CD4-positive, alpha-beta T cell (primary cell): ENCODE measurements at regions of chr13 and their contacts with region 1.

Region 1: GRCh38 chr13:30465585-30466357 is at the start of gene HMGB1:
- DNase-seq: peak; percentile 92 to 98 (median 94)
- ATAC-seq: peak; percentile 86
- H3K4me3 ChIP-seq: peak within 1 kb of the TSS; percentile 69
- H3K4me3 Mint-ChIP-seq: peak within 1 kb of the TSS; percentile 95
- H3K27ac ChIP-seq: peak within 1 kb of the TSS in 1 of 2 donors; percentile 96
- H3K27ac Mint-ChIP-seq: peak within 1 kb of the TSS; percentile 98
- H3K4me1 ChIP-seq: peaks cover 11% of the 10 kb centered on the region
- H3K4me1 Mint-ChIP-seq: peaks cover 37% of the 10 kb centered on the region
- H3K27me3 ChIP-seq: no peaks in the 10 kb centered on the region
- H3K27me3 Mint-ChIP-seq: peaks cover 6% of the 10 kb centered on the region
- CTCF ChIP-seq: no peak
- total RNA-seq, gene HMGB1: 448 to 465 TPM

Region 2: GRCh38 chr13:29595380-29596063 is 870.2 kb before region 1 on chr13 and contains the start of gene SLC7A1:
- CTCF ChIA-PET with region 1: no interaction called
- POLR2A ChIA-PET with region 1: interaction called, 5 read pairs
- intact Hi-C with region 1: loop called in 1 of 2 experiments (anchors 10 kb)
- DNase-seq: peak; percentile 54 to 95 (median 74)
- ATAC-seq: peak; percentile 90
- H3K4me3 ChIP-seq: peak within 1 kb of the TSS; percentile 65
- H3K4me3 Mint-ChIP-seq: peak within 1 kb of the TSS; percentile 97
- H3K27ac ChIP-seq: peak within 1 kb of the TSS; percentile 31 to 52
- H3K27ac Mint-ChIP-seq: peak within 1 kb of the TSS; percentile 93
- H3K4me1 ChIP-seq: peaks cover 23% of the 10 kb centered on the region
- H3K4me1 Mint-ChIP-seq: peaks cover 45% of the 10 kb centered on the region
- H3K27me3 ChIP-seq: no peaks in the 10 kb centered on the region
- H3K27me3 Mint-ChIP-seq: no peaks in the 10 kb centered on the region
- CTCF ChIP-seq: no peak
- total RNA-seq, gene SLC7A1: 11.3 to 12.3 TPM

Region 3: DNA sequence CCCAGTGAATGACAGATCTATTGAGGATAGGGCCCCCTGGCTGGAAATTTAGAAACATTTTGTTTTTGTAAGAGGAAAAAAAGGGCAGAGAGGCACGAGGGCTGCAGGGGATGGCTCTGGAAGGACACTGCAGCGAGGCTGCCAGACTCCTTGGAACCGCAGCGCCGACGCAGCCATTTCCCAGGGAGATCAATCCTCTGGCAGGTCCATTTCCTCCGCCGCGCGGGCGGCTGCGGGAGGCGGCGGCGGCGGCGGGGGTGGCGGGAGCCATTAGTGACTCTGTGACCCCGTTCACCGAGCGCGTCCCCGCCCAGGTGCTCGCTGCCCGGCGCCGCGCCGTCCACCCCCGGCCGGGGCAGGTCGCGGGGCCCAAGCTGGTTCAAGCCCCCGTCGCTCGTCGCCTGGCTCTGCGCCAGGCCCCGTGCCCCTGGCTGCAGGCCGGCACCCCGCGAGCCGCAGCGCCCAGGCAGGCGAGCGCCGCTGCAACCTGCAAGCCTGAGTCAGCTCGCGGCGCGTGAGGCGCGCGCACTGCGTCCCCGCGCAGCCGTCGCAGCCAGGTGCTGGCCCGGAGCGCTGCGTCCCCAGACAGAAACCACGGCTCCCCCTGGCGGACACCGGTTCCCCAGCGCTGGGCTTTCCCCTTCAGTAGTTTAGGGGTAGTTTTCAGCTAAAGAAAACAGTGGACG is 351.1 kb before region 1 on chr13:
- CTCF ChIA-PET with region 1: interaction called, 7 read pairs
- POLR2A ChIA-PET with region 1: interaction called, 7 read pairs
- intact Hi-C with region 1: loop called in 1 of 2 experiments (anchors 5 kb)
- DNase-seq: peak; percentile 85 to 97 (median 95)
- ATAC-seq: peak; percentile 88
- H3K4me3 ChIP-seq: peak overlapping the region; percentile 53
- H3K4me3 Mint-ChIP-seq: peak overlapping the region; percentile 91
- H3K27ac ChIP-seq: no peak overlapping the region
- H3K27ac Mint-ChIP-seq: peak overlapping the region; percentile 78
- H3K4me1 ChIP-seq: peaks cover 29% of the 10 kb centered on the region
- H3K4me1 Mint-ChIP-seq: peaks cover 44% of the 10 kb centered on the region
- H3K27me3 ChIP-seq: no peaks in the 10 kb centered on the region
- H3K27me3 Mint-ChIP-seq: no peaks in the 10 kb centered on the region
- CTCF ChIP-seq: peak; percentile 86

Region 4: GRCh38 chr13:30306762-30307193 is 159.0 kb before region 1 on chr13:
- CTCF ChIA-PET with region 1: interaction called, 3 read pairs
- POLR2A ChIA-PET with region 1: interaction called, 6 read pairs
- intact Hi-C with region 1: loop called in 1 of 2 experiments (anchors 5 kb)
- DNase-seq: peak; percentile 81 to 94 (median 88)
- ATAC-seq: peak; percentile 85
- H3K4me3 ChIP-seq: peak overlapping the region; percentile 86
- H3K4me3 Mint-ChIP-seq: peak overlapping the region; percentile 92
- H3K27ac ChIP-seq: peak overlapping the region; percentile 41 to 47
- H3K27ac Mint-ChIP-seq: peak overlapping the region; percentile 68
- H3K4me1 ChIP-seq: peaks cover 12% of the 10 kb centered on the region
- H3K4me1 Mint-ChIP-seq: peaks cover 12% of the 10 kb centered on the region
- H3K27me3 ChIP-seq: no peaks in the 10 kb centered on the region
- H3K27me3 Mint-ChIP-seq: no peaks in the 10 kb centered on the region
- CTCF ChIP-seq: no peak

Region 5: DNA sequence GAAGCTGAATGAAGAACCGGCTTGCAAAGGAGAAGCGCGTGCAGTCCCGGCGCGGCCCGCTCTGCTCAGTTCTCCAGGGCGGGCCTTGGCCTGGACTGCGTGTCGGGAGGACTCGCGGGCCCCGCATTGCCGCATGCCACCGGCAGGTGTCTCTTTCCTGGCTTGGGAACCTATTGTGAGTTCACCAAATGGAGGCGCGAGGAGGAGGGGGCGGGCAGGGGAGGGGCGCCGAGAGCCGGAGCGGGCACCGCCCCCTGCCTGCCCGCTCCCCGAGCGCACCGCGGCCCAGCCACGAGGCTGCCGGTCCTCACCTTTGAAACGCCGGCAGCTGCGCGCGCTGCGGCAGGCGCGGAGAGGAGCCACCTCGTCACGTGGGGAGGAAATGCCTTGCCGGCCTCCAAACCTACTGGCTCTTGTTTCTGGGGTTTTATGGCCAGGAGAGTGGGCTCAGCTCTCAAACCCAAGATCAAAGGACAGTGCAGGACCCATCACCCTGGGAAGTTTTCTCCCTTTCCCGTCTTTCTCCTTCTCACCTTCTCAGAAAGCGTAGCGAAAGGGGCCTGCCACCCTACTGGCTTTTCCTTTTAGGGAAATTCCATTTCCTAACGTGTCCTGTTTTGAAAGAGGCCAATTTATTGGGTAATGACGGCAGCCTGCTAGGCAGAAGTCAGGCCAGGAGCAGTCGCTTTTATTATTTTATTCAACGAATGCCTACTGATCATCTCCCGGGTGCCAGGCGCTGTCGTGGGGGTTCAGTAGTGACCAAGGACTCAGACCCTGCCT is 57.3 kb before region 1 on chr13:
- CTCF ChIA-PET with region 1: interaction called, 7 read pairs
- POLR2A ChIA-PET with region 1: interaction called, 16 read pairs
- intact Hi-C with region 1: loop called in 1 of 2 experiments (anchors 5 kb)
- DNase-seq: peak; percentile 83 to 96 (median 88)
- ATAC-seq: peak; percentile 91
- H3K4me3 ChIP-seq: peak overlapping the region; percentile 37
- H3K4me3 Mint-ChIP-seq: peak overlapping the region; percentile 76
- H3K27ac ChIP-seq: peak overlapping the region in 1 of 2 donors; percentile 76
- H3K27ac Mint-ChIP-seq: peak overlapping the region; percentile 78
- H3K4me1 ChIP-seq: peaks cover 20% of the 10 kb centered on the region
- H3K4me1 Mint-ChIP-seq: peaks cover 40% of the 10 kb centered on the region
- H3K27me3 ChIP-seq: no peaks in the 10 kb centered on the region
- H3K27me3 Mint-ChIP-seq: no peaks in the 10 kb centered on the region
- CTCF ChIP-seq: peak; percentile 63

Region 6: DNA sequence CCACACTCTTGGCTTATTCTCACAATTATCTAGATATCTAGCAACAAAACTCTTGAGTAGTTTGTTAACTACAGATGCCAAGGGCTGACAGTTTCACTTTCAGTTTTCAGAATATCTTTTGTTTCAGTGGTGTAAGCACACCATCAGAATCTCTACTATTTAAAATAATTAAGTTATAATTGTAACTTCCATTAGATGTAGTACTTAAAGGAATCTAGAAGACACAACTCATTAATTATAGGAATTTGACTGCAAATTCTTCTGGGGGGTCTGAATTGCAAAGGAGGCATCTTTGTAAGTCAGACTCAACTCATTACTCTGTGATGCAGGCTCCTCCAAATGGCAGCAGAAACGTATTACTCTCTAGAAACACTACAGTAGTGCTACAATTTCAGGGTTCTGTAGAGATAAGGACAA is 107.1 kb after region 1 on chr13:
- CTCF ChIA-PET with region 1: no interaction called
- POLR2A ChIA-PET with region 1: interaction called, 8 read pairs
- intact Hi-C with region 1: loop called (anchors 2 to 5 kb)
- DNase-seq: peak in 5 of 14 experiments; percentile 9 to 67 (median 63)
- ATAC-seq: peak; percentile 55
- H3K4me3 ChIP-seq: peak overlapping the region; percentile 44
- H3K4me3 Mint-ChIP-seq: peak overlapping the region; percentile 82
- H3K27ac ChIP-seq: peak overlapping the region; percentile 16 to 38
- H3K27ac Mint-ChIP-seq: peak overlapping the region; percentile 95
- H3K4me1 ChIP-seq: peaks cover 15% of the 10 kb centered on the region
- H3K4me1 Mint-ChIP-seq: peaks cover 37% of the 10 kb centered on the region
- H3K27me3 ChIP-seq: no peaks in the 10 kb centered on the region
- H3K27me3 Mint-ChIP-seq: no peaks in the 10 kb centered on the region
- CTCF ChIP-seq: peak; percentile 31

Region 7: DNA sequence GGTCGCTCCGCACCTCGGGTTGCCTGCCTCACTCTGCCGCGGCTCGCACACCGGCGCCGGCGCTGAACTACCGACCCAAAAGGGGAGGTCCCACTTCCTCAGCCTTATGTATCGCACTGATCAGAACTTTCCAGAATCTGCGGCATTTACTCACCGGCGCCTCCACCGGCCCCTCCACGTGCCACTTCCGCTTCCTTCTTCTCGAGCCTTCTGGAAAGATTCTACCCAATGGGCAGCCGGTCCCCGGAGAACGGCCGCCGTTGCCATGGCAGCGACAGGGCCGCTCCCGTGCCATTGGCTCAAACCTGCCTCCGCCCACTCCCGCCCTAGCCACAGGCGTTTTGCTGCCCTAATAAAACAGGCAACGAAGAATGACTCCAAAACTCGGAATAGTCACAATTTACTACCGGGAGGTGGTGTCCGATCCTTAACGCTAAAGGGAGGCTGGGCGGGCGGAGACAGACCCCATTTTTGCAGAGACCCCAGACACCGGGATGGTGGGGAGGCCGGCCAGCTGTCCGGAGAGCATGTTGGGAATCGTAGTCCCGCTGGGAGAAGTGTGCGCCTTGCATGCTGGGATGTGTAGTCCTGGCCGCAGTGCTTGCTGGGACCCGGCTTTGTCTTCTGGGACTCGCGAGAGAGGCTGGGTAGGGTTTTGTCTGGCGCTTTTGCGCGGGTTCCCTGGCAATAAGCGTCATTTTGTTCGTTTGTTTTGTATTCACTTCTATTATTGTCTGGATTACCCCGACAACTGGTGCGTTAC is 696.2 kb after region 1 on chr13 and contains the start of gene HSPH1:
- CTCF ChIA-PET with region 1: no interaction called
- POLR2A ChIA-PET with region 1: no interaction called
- intact Hi-C with region 1: loop called in 1 of 2 experiments (anchors 5 kb)
- DNase-seq: peak; percentile 95 to 99 (median 98)
- ATAC-seq: peak; percentile 81
- H3K4me3 ChIP-seq: peak within 1 kb of the TSS; percentile 93
- H3K4me3 Mint-ChIP-seq: peak within 1 kb of the TSS; percentile 96
- H3K27ac ChIP-seq: peak within 1 kb of the TSS; percentile 94 to 95
- H3K27ac Mint-ChIP-seq: peak within 1 kb of the TSS; percentile 98
- H3K4me1 ChIP-seq: peaks cover 17% of the 10 kb centered on the region
- H3K4me1 Mint-ChIP-seq: peaks cover 46% of the 10 kb centered on the region
- H3K27me3 ChIP-seq: no peaks in the 10 kb centered on the region
- H3K27me3 Mint-ChIP-seq: no peaks in the 10 kb centered on the region
- CTCF ChIP-seq: peak; percentile 13
- total RNA-seq, gene HSPH1: 226 to 238 TPM